Activated T-helper 2 cell treated with anti-CD3 and anti-CD28 coated beads, Interferon-gamma antibody, Interleukin-2, Interleukin-4, amounts not matched to agents 10 μg/mL and 5 μg/mL and 100 μg/mL, durations not matched to agents 14 hours and 24 hours and 36 hours (primary cell): ENCODE measurements at regions of chrX and their contacts with region 1.

Region 1: DNA sequence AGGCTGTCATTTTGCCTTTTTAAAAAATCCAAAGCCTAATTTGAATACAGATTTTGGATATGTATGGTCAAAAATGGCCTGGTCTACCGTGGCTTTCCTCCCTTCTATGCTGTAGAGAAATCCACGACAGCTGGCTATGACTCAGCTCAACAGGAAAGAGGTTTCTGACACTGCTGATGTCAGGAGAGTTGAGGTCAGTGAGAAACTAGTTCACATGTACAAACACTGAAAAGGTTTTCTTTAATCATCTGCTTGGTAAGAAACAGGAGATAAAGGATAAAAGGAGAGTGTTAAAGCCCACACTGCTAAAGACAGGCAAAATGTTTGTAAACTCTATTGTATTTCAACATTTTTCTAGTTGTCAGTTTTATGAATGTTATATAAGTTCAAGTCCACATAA is 113.9 kb downstream of the NYX start:
- DNase-seq: peak; percentile 19
- H3K4me3 Mint-ChIP-seq: no peak overlapping the region
- H3K27ac Mint-ChIP-seq: peak overlapping the region; percentile 65
- H3K4me1 Mint-ChIP-seq: peaks cover 38% of the 10 kb centered on the region
- H3K27me3 Mint-ChIP-seq: no peaks in the 10 kb centered on the region

Region 2: GRCh38 chrX:41518841-41519220 is 42.2 kb before region 1 on chrX:
- intact Hi-C with region 1: loop called (anchors 2 kb)
- DNase-seq: no peak
- H3K4me3 Mint-ChIP-seq: no peak overlapping the region
- H3K27ac Mint-ChIP-seq: peak overlapping the region; percentile 62
- H3K4me1 Mint-ChIP-seq: peaks cover 30% of the 10 kb centered on the region
- H3K27me3 Mint-ChIP-seq: no peaks in the 10 kb centered on the region

Region 3: GRCh38 chrX:41604766-41605543 is 43.9 kb after region 1 on chrX:
- intact Hi-C with region 1: no loop called
- DNase-seq: no peak
- H3K4me3 Mint-ChIP-seq: no peak overlapping the region
- H3K27ac Mint-ChIP-seq: no peak overlapping the region
- H3K4me1 Mint-ChIP-seq: no peaks in the 10 kb centered on the region
- H3K27me3 Mint-ChIP-seq: no peaks in the 10 kb centered on the region

Region 4: GRCh38 chrX:41734530-41734929 is 173.5 kb after region 1 on chrX:
- intact Hi-C with region 1: loop called (anchors 1 kb)
- DNase-seq: no peak
- H3K4me3 Mint-ChIP-seq: peak overlapping the region; percentile 26
- H3K27ac Mint-ChIP-seq: peak overlapping the region; percentile 89
- H3K4me1 Mint-ChIP-seq: peaks cover 28% of the 10 kb centered on the region
- H3K27me3 Mint-ChIP-seq: no peaks in the 10 kb centered on the region

Region 5: GRCh38 chrX:41759817-41760216 is 198.8 kb after region 1 on chrX:
- intact Hi-C with region 1: loop called (anchors 1 kb)
- DNase-seq: no peak
- H3K4me3 Mint-ChIP-seq: no peak overlapping the region
- H3K27ac Mint-ChIP-seq: no peak overlapping the region
- H3K4me1 Mint-ChIP-seq: no peaks in the 10 kb centered on the region
- H3K27me3 Mint-ChIP-seq: no peaks in the 10 kb centered on the region